GM10248 (cell line): ENCODE measurements at regions of chr12 and their contacts with region 1.

Region 1: GRCh38 chr12:32755654-32756475 is at the start of gene YARS2:
- DNase-seq: peak; percentile 88
- CTCF ChIP-seq: peak; percentile 78

Region 2: DNA sequence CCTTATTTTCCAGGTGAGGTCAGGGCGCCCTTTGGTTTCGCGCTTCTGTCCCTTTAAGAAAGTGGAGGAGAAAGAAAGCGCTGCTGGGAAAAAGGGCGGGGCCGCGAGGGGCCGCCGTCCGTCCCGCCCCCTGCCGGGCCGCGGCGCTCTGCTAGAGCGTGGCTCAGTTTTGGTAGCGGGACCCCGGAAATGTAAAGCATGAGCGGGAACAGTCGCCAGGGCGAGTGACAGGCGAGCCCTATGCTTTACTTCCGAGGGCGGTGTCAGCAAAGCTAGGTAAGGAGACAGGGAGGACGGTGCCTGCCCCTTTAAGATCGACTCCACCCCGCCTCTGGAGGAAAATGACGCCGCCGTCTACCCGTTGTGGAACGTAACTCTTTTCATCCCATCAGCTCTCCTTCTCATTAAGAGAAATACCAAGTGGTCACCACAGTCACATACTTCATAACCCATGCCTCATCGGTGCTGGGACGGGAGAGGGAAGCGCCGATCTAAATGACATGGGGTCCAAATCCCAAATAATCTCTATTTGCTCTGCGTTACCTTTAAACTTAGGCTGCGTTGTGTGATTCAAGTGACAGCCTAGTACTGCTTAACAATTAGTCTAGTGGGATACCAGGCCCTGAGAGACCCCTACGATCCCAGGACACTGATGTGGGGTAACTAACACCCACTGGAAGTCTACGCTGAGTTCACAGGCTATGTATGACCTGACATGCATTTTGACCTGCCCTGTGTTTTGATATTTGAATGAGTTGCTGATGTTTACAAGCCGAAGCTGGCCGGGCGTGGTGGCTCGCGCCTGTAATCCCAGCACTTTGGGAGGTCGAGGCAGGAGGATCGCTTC is 1096.6 kb before region 1 on chr12 and contains the start of gene ETFBKMT:
- CTCF ChIA-PET with region 1: interaction called, 23 read pairs
- POLR2A ChIA-PET with region 1: no interaction called
- DNase-seq: peak; percentile 92
- CTCF ChIP-seq: no peak

Region 3: DNA sequence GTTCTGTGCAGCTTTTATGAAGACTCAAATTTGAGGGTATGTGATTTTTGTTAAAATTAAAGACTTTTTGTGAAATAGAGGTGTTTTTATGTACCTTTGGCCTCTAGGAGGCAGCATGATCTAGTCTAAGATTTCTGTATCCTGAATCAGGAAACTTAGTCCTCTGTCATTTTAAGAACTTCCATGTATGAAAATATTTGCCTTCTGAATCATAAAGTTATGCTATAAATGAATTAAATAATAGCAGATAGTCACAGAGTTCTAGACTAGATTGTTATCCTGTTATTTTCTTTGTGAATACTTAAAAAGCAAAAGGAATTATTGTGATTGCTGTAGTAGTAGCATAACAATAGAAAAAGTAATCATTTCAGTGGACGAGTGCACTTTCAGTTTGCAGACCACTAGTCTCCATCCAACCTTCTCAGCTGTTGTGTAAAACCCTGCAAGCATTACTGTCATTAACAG is 300.2 kb before region 1 on chr12:
- CTCF ChIA-PET with region 1: interaction called, 77 read pairs
- POLR2A ChIA-PET with region 1: no interaction called
- DNase-seq: peak; percentile 46
- CTCF ChIP-seq: peak; percentile 54

Region 4: DNA sequence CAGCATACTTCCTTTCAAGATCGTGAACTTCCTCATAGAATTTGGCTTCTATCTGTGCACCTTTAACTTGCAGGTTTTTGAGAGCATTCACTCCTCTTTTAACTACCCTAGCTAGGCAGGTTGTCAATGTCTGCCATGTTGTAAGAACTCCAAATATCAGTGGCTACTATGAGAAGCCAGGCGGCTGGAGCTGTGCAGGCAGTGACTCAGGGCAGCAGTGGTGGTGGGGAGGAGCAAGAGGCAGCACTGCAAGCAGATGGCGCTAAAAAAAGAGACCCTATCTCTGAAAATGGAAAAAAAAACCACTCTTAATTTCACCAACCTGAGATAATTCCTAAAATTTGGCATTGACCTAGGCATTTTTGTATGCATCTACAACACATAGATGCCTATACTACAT is 28.6 kb before region 1 on chr12:
- CTCF ChIA-PET with region 1: interaction called, 16 read pairs
- POLR2A ChIA-PET with region 1: no interaction called
- DNase-seq: no peak
- CTCF ChIP-seq: no peak

Region 5: GRCh38 chr12:32770141-32770540 is 14.3 kb after region 1 on chr12:
- CTCF ChIA-PET with region 1: interaction called, 25 read pairs
- POLR2A ChIA-PET with region 1: no interaction called
- DNase-seq: no peak
- CTCF ChIP-seq: no peak

Region 6: DNA sequence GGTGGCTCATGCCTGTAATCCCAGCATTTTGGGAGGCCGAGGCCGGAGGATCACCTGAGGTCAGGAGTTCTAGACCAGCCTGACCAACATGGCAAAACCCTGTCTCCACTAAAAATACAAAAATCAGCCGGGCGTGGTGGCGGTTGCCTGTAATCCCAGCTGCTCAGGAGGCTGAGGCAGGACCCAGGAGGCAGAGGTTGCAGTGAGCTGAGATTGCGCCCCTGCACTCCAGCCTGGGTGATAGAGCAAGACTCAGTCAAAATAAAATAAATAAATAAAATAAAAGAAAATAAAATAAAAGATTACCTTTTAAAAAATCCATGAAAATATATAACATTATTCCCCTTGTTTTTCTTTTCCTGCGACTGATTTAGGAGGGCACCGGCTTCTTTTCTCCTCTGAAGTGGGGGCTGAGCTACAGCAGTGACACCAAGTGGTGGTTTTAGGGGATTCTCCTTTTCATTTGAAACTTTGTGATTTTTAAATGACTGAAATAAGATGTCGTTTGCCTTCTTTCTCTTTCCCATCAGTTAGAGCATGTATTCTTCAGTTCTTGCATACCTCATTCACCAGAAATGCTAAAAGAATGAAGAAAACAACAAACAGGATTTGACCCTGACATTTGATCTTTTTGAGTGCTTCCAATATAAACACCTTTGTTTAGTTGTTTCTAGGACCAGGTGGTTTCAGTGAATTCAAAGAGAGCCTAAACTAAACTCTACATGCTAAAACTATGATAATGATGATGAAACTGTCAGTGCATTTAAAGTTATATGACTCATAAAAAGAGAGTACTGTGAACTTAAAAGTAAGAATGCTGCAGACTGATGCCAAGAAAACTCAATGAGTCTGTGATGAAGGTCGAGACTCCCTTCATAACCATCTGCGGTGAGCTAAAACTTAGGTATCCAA is 163.3 kb after region 1 on chr12:
- CTCF ChIA-PET with region 1: interaction called, 19 read pairs
- POLR2A ChIA-PET with region 1: no interaction called
- DNase-seq: peak; percentile 26
- CTCF ChIP-seq: peak; percentile 38

Region 7: GRCh38 chr12:33026791-33027190 is 270.9 kb after region 1 on chr12:
- CTCF ChIA-PET with region 1: no interaction called
- POLR2A ChIA-PET with region 1: no interaction called
- DNase-seq: no peak
- CTCF ChIP-seq: no peak